ENCODE measurements at regions of chr14 and their contacts with region 1.

Region 1: GRCh38 chr14:63388763-63389431 is 70.2 kb upstream of the GPHB5 start:
- DNase-seq: peak; percentile 75
- H3K4me3 ChIP-seq: no peak overlapping the region
- H3K27ac ChIP-seq: no peak overlapping the region
- H3K4me1 ChIP-seq: no peaks in the 10 kb centered on the region
- H3K27me3 ChIP-seq: no peaks in the 10 kb centered on the region
- CTCF ChIP-seq: peak; percentile 73 to 81
- POLR2A ChIP-seq: no peak

Region 2: GRCh38 chr14:63632932-63633514 is 244.1 kb after region 1 on chr14:
- CTCF ChIA-PET with region 1: interaction called, 46 read pairs
- POLR2A ChIA-PET with region 1: no interaction called
- dilution Hi-C with region 1: no loop called
- intact Hi-C with region 1: loop called (anchors 2 kb)
- DNase-seq: peak; percentile 52
- H3K4me3 ChIP-seq: no peak overlapping the region
- H3K27ac ChIP-seq: no peak overlapping the region
- H3K4me1 ChIP-seq: no peaks in the 10 kb centered on the region
- H3K27me3 ChIP-seq: no peaks in the 10 kb centered on the region
- CTCF ChIP-seq: peak; percentile 41 to 45
- POLR2A ChIP-seq: no peak